ENCODE measurements at regions of chr17 and their contacts with region 1.

Region 1: GRCh38 chr17:31494259-31495021 is 103.0 kb downstream of the RAB11FIP4 start:
- DNase-seq: peak; percentile 59
- H3K4me3 Mint-ChIP-seq: peak overlapping the region; percentile 67
- H3K27ac Mint-ChIP-seq: peak overlapping the region; percentile 91
- H3K4me1 Mint-ChIP-seq: peaks cover 68% of the 10 kb centered on the region
- H3K27me3 Mint-ChIP-seq: no peaks in the 10 kb centered on the region

Region 2: DNA sequence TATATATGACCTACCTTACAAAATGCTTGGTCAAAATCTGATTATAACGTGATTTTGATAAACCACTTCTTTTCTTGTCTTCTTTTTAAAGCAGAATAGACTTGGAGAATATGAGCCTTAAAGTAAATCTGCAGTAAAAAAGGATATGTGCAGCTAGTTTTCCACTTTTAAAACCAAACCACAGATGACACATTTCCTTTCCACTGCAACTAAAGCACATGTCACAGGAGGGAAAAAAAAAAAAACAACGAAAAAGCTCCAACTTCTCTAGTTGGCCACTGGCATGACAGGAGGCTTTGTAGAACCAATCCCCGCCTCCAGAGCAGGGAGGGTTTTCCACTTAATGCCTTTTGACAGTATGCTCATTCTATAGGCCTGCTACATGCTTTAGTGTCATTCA is 173.0 kb before region 1 on chr17 and contains the start of gene EVI2A:
- intact Hi-C with region 1: loop called (anchors 2 kb)
- DNase-seq: peak; percentile 80
- H3K4me3 Mint-ChIP-seq: peak within 1 kb of the TSS; percentile 88
- H3K27ac Mint-ChIP-seq: peak within 1 kb of the TSS; percentile 92
- H3K4me1 Mint-ChIP-seq: peaks cover 46% of the 10 kb centered on the region
- H3K27me3 Mint-ChIP-seq: no peaks in the 10 kb centered on the region
- total RNA-seq, gene EVI2A: 46.3 and 47.9 TPM in 2 replicates

Region 3: GRCh38 chr17:31481783-31482081 is 12.7 kb before region 1 on chr17:
- intact Hi-C with region 1: loop called (anchors 1 kb)
- DNase-seq: no peak
- H3K4me3 Mint-ChIP-seq: no peak overlapping the region
- H3K27ac Mint-ChIP-seq: no peak overlapping the region
- H3K4me1 Mint-ChIP-seq: peaks cover 11% of the 10 kb centered on the region
- H3K27me3 Mint-ChIP-seq: peaks cover 4% of the 10 kb centered on the region

Region 4: GRCh38 chr17:31549525-31550388 is 55.3 kb after region 1 on chr17:
- intact Hi-C with region 1: loop called (anchors 2 kb)
- DNase-seq: peak; percentile 86
- H3K4me3 Mint-ChIP-seq: peak overlapping the region; percentile 92
- H3K27ac Mint-ChIP-seq: peak overlapping the region; percentile 89
- H3K4me1 Mint-ChIP-seq: peaks cover 15% of the 10 kb centered on the region
- H3K27me3 Mint-ChIP-seq: peaks cover 18% of the 10 kb centered on the region

Region 5: GRCh38 chr17:31858642-31859473 is 364.4 kb after region 1 on chr17 and contains the start of gene COPRS:
- intact Hi-C with region 1: loop called (anchors 5 kb)
- DNase-seq: peak; percentile 74
- H3K4me3 Mint-ChIP-seq: peak within 1 kb of the TSS; percentile 83
- H3K27ac Mint-ChIP-seq: peak within 1 kb of the TSS; percentile 82
- H3K4me1 Mint-ChIP-seq: peaks cover 28% of the 10 kb centered on the region
- H3K27me3 Mint-ChIP-seq: peaks cover 2% of the 10 kb centered on the region
- total RNA-seq, gene COPRS: 62.2 and 64.6 TPM in 2 replicates

Measured in activated T-helper 1 cell treated with anti-CD3 and anti-CD28 coated beads, Interleukin-12 subunit alpha, Interleukin-12 subunit beta, Interleukin-2, Interleukin-4 antibody, amounts not matched to agents 30 ng/mL and 10 ng/mL and 1 ng/mL, durations not matched to agents 14 hours and 24 hours and 36 hours (primary cell).